Activated CD4-positive, alpha-beta memory T cell treated with anti-CD3 and anti-CD28 coated beads, Interleukin-2, amount 10 ng/mL, durations not matched to agents 7 days and 5 days (primary cell): ENCODE measurements at regions of chr5 and their contacts with region 1.

Region 1: GRCh38 chr5:132190161-132190817 is 37.4 kb downstream of the P4HA2 start:
- DNase-seq: no peak
- H3K4me3 Mint-ChIP-seq: no peak overlapping the region
- H3K27ac Mint-ChIP-seq: no peak overlapping the region
- H3K4me1 Mint-ChIP-seq: peaks cover 6% of the 10 kb centered on the region
- H3K27me3 Mint-ChIP-seq: peaks cover 7% of the 10 kb centered on the region

Region 2: GRCh38 chr5:132180134-132180745 is 10.0 kb before region 1 on chr5:
- CTCF ChIA-PET with region 1: interaction called, 30 read pairs
- POLR2A ChIA-PET with region 1: interaction called, 4 read pairs
- DNase-seq: no peak
- H3K4me3 Mint-ChIP-seq: no peak overlapping the region
- H3K27ac Mint-ChIP-seq: peak overlapping the region; percentile 58
- H3K4me1 Mint-ChIP-seq: peaks cover 44% of the 10 kb centered on the region
- H3K27me3 Mint-ChIP-seq: no peaks in the 10 kb centered on the region